ENCODE measurements at regions of chr6 and their contacts with region 1.

Region 1: GRCh38 chr6:125153391-125154117 is at the start of gene TPD52L1:
- DNase-seq: peak; percentile 81
- H3K4me3 ChIP-seq: peak within 1 kb of the TSS; percentile 49 to 63 (median 57)
- H3K27ac ChIP-seq: peak within 1 kb of the TSS; percentile 61 to 75 (median 66)
- H3K4me1 ChIP-seq: peaks cover 0 to 17% (median 11%) of the 10 kb centered on the region in 4 donors
- H3K27me3 ChIP-seq: peaks cover 16% of the 10 kb centered on the region
- CTCF ChIP-seq: peak; percentile 69 to 85 (median 81)
- EP300 ChIP-seq: no peak
- POLR2A ChIP-seq: no peak
- total RNA-seq, gene TPD52L1: 2.6 to 96.5 (median 25.2) TPM

Region 2: GRCh38 chr6:123777563-123777962 is 1376.0 kb before region 1 on chr6:
- in situ Hi-C with region 1: no loop called
- intact Hi-C with region 1: no loop called
- DNase-seq: no peak
- H3K4me3 ChIP-seq: no peak overlapping the region
- H3K27ac ChIP-seq: no peak overlapping the region
- H3K4me1 ChIP-seq: no peaks in the 10 kb centered on the region
- H3K27me3 ChIP-seq: no peaks in the 10 kb centered on the region
- CTCF ChIP-seq: no peak
- EP300 ChIP-seq: no peak
- POLR2A ChIP-seq: no peak

Region 3: DNA sequence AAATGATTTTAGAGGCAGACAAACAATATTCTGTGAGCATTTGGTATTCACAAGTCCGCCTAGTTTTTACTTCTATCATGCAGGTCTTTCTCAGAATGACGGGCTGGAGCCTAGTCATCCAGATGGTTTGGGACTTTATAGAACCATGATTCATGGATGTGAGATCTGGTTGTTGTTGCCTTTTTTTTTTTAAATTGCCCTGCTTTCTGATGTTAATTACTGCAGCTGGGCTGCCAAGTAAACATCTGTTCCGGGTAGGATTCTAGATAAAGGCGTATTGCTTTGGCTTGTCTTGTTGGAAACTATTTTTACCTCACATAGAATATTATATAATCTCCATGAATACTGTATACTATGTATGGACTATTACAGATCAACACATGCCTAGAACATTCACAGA is 133.2 kb before region 1 on chr6:
- in situ Hi-C with region 1: no loop called
- intact Hi-C with region 1: no loop called
- DNase-seq: no peak
- H3K4me3 ChIP-seq: no peak overlapping the region
- H3K27ac ChIP-seq: no peak overlapping the region
- H3K4me1 ChIP-seq: peaks cover 0 to 24% (median 10%) of the 10 kb centered on the region in 4 donors
- H3K27me3 ChIP-seq: no peaks in the 10 kb centered on the region
- CTCF ChIP-seq: no peak
- EP300 ChIP-seq: no peak
- POLR2A ChIP-seq: no peak

Region 4: DNA sequence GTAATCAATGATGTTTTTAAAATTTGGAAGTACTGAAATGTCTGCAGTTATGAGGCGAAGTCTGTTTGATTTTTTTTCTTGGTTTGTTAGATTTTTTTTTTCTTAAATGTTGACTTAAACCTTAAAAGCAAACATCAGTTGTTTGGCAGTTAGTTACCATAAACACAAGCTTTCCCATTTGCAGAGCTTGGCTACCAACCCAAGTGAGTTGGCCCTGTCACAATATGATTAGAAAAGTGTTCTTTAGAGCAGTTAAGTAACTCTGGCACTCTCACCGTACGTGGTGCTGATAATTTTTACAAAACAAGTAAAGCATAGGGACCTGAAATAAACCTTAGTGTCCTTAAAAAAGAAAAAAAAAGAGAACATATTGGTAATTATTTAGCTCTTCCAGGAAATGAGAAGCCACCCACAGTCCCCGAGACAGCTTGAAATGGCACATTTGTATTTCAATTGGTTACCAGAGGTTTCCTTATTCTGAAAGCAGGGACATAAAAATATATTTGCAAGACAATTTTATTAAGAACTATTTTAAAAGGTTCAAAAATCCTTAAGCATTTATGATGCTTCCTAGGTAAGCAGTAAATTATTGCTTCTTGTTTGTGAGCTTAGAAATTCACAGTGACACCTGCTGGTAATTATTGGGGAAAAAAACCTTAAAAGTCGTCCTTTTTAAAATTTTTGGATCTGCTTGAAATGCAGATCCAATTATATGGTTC is 599.8 kb after region 1 on chr6:
- in situ Hi-C with region 1: loop called in 2 of 4 experiments (anchors 25 kb)
- intact Hi-C with region 1: no loop called
- DNase-seq: no peak
- H3K4me3 ChIP-seq: no peak overlapping the region
- H3K27ac ChIP-seq: no peak overlapping the region
- H3K4me1 ChIP-seq: peaks cover 6 to 25% (median 14%) of the 10 kb centered on the region in 4 donors
- H3K27me3 ChIP-seq: peaks cover 86% of the 10 kb centered on the region
- CTCF ChIP-seq: peak in 4 of 5 experiments; percentile 18 to 38 (median 32)
- EP300 ChIP-seq: no peak
- POLR2A ChIP-seq: no peak

Region 5: DNA sequence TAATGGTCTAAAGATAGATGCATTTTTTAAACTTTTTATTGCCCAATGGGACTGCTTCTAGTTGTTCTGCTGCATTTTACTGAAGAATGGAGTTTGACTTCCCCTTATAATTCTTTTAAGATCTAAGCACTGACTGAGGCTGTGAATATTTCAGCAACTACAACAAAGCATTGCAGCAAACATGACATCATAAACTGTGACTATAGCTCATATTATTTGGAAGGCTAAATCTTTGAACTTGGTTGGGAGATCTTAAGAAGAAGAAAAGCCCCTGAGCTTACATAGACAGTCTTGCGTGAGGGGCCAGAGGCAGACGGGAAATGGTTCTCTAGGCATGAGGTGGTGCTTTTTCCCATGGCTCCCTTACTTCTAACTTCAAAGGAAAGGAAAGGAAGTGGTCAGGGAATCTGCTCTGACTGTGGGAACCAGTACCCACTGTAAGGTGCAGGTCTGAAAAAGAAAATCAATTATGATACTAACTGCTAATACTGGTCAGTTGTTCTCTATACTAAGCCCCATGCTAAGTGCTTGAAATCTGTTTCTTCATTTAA is 610.6 kb after region 1 on chr6:
- in situ Hi-C with region 1: loop called in 3 of 4 experiments (anchors 10 to 25 kb)
- intact Hi-C with region 1: no loop called
- DNase-seq: no peak
- H3K4me3 ChIP-seq: no peak overlapping the region
- H3K27ac ChIP-seq: no peak overlapping the region
- H3K4me1 ChIP-seq: no peaks in the 10 kb centered on the region
- H3K27me3 ChIP-seq: peaks cover 62% of the 10 kb centered on the region
- CTCF ChIP-seq: no peak
- EP300 ChIP-seq: no peak
- POLR2A ChIP-seq: no peak

Measured in transverse colon (tissue), 4 donors.